Aorta (tissue), 5 donors: ENCODE measurements at regions of chr6 and their contacts with region 1.

Region 1: GRCh38 chr6:11496152-11497060 is 41.1 kb upstream of the TMEM170B start:
- DNase-seq: peak in 1 of 2 donors; percentile 61
- ATAC-seq: peak; percentile 93
- H3K4me3 ChIP-seq: no peak overlapping the region
- H3K27ac ChIP-seq: no peak overlapping the region
- H3K4me1 ChIP-seq: peaks cover 0 to 2% of the 10 kb centered on the region in 2 donors
- H3K27me3 ChIP-seq: no peaks in the 10 kb centered on the region

Region 2: GRCh38 chr6:9620263-9620662 is 1876.1 kb before region 1 on chr6:
- intact Hi-C with region 1: no loop called
- DNase-seq: no peak
- ATAC-seq: no peak
- H3K4me3 ChIP-seq: no peak overlapping the region
- H3K27ac ChIP-seq: no peak overlapping the region
- H3K4me1 ChIP-seq: no peaks in the 10 kb centered on the region
- H3K27me3 ChIP-seq: no peaks in the 10 kb centered on the region

Region 3: GRCh38 chr6:11144393-11144851 is 352.0 kb before region 1 on chr6:
- intact Hi-C with region 1: loop called (anchors 1 kb)
- DNase-seq: peak; percentile 85 to 91
- ATAC-seq: peak; percentile 89
- H3K4me3 ChIP-seq: no peak overlapping the region
- H3K27ac ChIP-seq: no peak overlapping the region
- H3K4me1 ChIP-seq: no peaks in the 10 kb centered on the region
- H3K27me3 ChIP-seq: no peaks in the 10 kb centered on the region

Region 4: GRCh38 chr6:11172501-11173332 is 323.7 kb before region 1 on chr6:
- intact Hi-C with region 1: loop called (anchors 1 to 5 kb)
- DNase-seq: peak; percentile 77 to 90
- ATAC-seq: peak; percentile 77
- H3K4me3 ChIP-seq: no peak overlapping the region
- H3K27ac ChIP-seq: no peak overlapping the region
- H3K4me1 ChIP-seq: peaks cover 0 to 3% of the 10 kb centered on the region in 2 donors
- H3K27me3 ChIP-seq: no peaks in the 10 kb centered on the region

Region 5: DNA sequence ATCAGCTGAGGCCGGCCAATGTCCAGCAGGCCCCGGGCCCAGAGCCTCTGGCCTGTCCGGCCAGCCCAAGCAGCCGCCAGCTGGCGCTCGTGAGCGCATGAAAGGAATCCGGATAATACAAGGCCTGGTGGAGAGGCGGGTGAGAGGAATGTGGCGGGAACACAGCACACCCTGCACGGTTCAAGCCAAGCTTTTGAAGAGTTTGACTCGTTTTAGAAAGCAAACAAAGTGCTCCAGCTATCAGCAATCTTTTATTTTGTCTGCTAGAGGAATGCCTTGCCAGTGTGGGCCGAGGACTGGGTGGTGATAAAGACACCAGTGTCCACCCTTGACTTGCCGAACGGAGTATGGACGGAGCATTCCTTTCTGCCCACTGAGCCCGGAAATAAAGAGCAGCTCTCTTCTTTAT is 254.6 kb before region 1 on chr6:
- intact Hi-C with region 1: loop called (anchors 5 kb)
- DNase-seq: peak; percentile 87 to 94
- ATAC-seq: peak; percentile 94
- H3K4me3 ChIP-seq: no peak overlapping the region
- H3K27ac ChIP-seq: peak overlapping the region in 1 of 2 donors; percentile 87
- H3K4me1 ChIP-seq: peaks cover 2 to 8% of the 10 kb centered on the region in 2 donors
- H3K27me3 ChIP-seq: no peaks in the 10 kb centered on the region

Region 6: GRCh38 chr6:11434565-11435326 is 61.7 kb before region 1 on chr6:
- intact Hi-C with region 1: loop called in 1 of 2 experiments (anchors 5 kb)
- DNase-seq: no peak
- ATAC-seq: no peak
- H3K4me3 ChIP-seq: no peak overlapping the region
- H3K27ac ChIP-seq: peak overlapping the region; percentile 88 to 89
- H3K4me1 ChIP-seq: peaks cover 5 to 16% of the 10 kb centered on the region in 2 donors
- H3K27me3 ChIP-seq: no peaks in the 10 kb centered on the region